ENCODE measurements at regions of chr1 and their contacts with region 1.

Region 1: DNA sequence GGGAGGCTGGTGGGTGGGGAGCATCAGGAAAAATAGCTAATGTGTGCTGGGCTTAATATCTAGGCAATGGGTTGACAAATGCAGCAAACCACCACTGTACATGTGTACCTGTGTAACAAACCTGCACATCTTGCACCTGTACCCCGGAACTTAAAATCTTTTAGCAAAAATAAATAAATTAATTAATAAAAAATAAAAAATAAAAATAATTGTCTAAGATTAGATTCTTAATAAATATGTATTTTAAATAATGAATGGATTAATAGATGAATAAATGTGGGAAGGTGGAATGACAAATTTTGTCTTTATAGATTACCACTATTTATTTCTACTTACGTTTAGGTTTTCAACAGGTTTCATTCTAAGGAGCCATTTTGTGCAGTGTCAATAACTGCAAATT is 563.5 kb upstream of the B3GALT2 start:
- DNase-seq: no peak
- H3K4me3 Mint-ChIP-seq: no peak overlapping the region
- H3K27ac Mint-ChIP-seq: no peak overlapping the region
- H3K4me1 Mint-ChIP-seq: no peaks in the 10 kb centered on the region
- H3K27me3 Mint-ChIP-seq: no peaks in the 10 kb centered on the region

Region 2: DNA sequence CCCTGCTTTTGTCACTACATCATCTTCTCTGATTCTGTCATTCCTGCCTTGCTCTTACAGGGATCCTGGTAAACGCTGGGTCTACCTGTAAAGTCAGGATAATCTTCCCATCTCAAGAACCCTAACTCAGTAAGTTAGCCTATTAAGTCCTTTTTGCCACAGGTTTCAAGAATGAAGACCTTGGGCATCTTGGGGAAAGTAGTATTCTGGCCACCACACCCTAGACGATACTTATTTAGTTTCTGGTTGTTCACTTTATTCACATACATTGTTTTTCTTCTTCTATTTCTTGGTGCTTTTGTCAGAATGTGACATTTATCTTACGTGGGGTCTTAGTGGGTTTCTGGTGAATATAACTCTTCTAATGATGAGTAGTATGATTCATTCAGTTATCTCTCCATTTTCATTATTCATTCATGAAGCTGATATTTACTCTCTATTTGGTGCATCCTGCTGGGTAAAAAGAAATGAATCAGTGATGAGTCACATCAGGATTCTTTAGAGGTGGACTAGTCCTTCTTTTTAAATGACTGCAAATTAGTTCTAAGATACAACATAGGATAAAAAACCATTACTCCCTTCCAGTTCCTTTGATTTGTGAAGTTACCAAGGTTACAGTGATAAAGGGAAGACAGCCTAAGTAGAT is 49.0 kb before region 1 on chr1:
- CTCF ChIA-PET with region 1: no interaction called
- intact Hi-C with region 1: loop called (anchors 2 kb)
- DNase-seq: no peak
- H3K4me3 Mint-ChIP-seq: no peak overlapping the region
- H3K27ac Mint-ChIP-seq: no peak overlapping the region
- H3K4me1 Mint-ChIP-seq: peaks cover 15% of the 10 kb centered on the region
- H3K27me3 Mint-ChIP-seq: no peaks in the 10 kb centered on the region

Region 3: DNA sequence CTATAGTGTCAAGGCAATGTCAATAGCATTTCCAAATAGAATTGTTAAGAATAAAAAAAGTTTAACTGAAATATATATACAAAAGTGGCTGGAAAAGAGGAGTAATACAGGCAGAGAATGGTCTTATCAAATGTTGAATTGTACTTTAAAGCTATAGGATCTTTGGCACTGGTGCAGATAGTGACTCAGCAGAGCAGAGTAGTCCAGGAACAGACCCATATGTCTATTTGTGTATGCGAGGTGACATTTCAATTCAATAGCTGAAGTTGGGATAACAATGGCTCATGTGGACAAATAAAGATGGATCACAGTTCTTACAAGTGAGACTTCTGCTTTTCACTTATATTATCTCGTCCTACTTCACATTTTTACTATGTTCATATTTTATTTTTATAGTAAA is 20.4 kb before region 1 on chr1:
- CTCF ChIA-PET with region 1: no interaction called
- intact Hi-C with region 1: no loop called
- DNase-seq: no peak
- H3K4me3 Mint-ChIP-seq: no peak overlapping the region
- H3K27ac Mint-ChIP-seq: no peak overlapping the region
- H3K4me1 Mint-ChIP-seq: no peaks in the 10 kb centered on the region
- H3K27me3 Mint-ChIP-seq: no peaks in the 10 kb centered on the region